ENCODE measurements at regions of chr1 and their contacts with region 1.

Region 1: GRCh38 chr1:39196244-39197215 is 8.0 kb upstream of the MACF1 start:
- DNase-seq: peak; percentile 32 to 86 (median 79)
- H3K4me3 ChIP-seq: peak overlapping the region; percentile 44
- H3K4me3 Mint-ChIP-seq: peak overlapping the region; percentile 38 to 83 (median 71)
- H3K27ac ChIP-seq: peak overlapping the region; percentile 60
- H3K27ac Mint-ChIP-seq: peak overlapping the region; percentile 39 to 97 (median 90)
- H3K4me1 ChIP-seq: peaks cover 67% of the 10 kb centered on the region
- H3K4me1 Mint-ChIP-seq: peaks cover 72 to 81% (median 78%) of the 10 kb centered on the region in 3 donors
- H3K27me3 ChIP-seq: no peaks in the 10 kb centered on the region
- H3K27me3 Mint-ChIP-seq: no peaks in the 10 kb centered on the region

Region 2: GRCh38 chr1:38953433-38953860 is 243.1 kb before region 1 on chr1:
- CTCF ChIA-PET with region 1: no interaction called
- POLR2A ChIA-PET with region 1: no interaction called
- DNase-seq: no peak
- H3K4me3 ChIP-seq: no peak overlapping the region
- H3K4me3 Mint-ChIP-seq: no peak overlapping the region
- H3K27ac ChIP-seq: no peak overlapping the region
- H3K27ac Mint-ChIP-seq: peak overlapping the region in 1 of 8 donors; percentile 19
- H3K4me1 ChIP-seq: no peaks in the 10 kb centered on the region
- H3K4me1 Mint-ChIP-seq: peaks cover 2 to 6% (median 6%) of the 10 kb centered on the region in 3 donors
- H3K27me3 ChIP-seq: no peaks in the 10 kb centered on the region
- H3K27me3 Mint-ChIP-seq: no peaks in the 10 kb centered on the region

Region 3: DNA sequence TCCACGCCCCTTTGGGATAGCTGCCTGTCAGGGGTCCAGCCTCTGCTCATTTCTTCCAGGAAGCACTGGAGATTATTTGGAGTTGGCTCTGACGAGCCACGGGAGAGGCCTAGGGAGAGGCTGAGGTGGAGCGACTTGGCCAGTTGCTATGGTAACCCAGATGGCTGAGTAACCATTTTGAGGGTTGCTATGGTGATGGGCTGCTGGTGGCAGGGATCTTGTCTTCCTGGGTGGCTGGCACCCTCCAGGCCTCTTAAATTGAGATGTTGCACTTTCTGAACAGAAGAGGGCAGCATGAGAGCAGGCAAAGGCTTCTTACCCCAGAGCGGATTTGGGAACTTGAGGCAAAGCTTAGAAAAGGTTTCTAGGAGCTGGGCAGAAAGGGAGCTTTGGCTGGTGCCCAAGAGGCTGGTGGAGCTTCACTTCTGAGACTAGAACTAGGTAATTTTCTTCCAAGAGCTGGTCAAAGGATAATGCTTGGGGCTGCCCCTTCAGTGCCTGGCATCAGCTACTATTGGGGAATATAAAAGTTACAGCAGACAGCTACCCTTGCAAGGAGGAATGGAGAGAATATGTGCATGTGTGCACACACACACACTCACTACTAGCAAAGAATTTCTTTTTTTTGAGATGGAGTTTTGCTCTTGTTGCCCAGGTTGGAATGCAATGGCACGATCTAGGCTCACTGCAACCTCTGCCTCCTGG is 97.8 kb before region 1 on chr1:
- CTCF ChIA-PET with region 1: interaction called, 37 read pairs
- POLR2A ChIA-PET with region 1: no interaction called
- DNase-seq: peak; percentile 29 to 77 (median 67)
- H3K4me3 ChIP-seq: no peak overlapping the region
- H3K4me3 Mint-ChIP-seq: peak overlapping the region in 1 of 7 donors; percentile 51
- H3K27ac ChIP-seq: no peak overlapping the region
- H3K27ac Mint-ChIP-seq: peak overlapping the region in 5 of 8 donors; percentile 6 to 64 (median 27)
- H3K4me1 ChIP-seq: peaks cover 16% of the 10 kb centered on the region
- H3K4me1 Mint-ChIP-seq: peaks cover 10 to 17% (median 15%) of the 10 kb centered on the region in 3 donors
- H3K27me3 ChIP-seq: no peaks in the 10 kb centered on the region
- H3K27me3 Mint-ChIP-seq: peaks cover 0 to 2% of the 10 kb centered on the region in 2 donors

Region 4: GRCh38 chr1:39214998-39215873 is 18.7 kb after region 1 on chr1:
- CTCF ChIA-PET with region 1: interaction called, 76 read pairs
- POLR2A ChIA-PET with region 1: interaction called, 12 read pairs
- DNase-seq: peak in 4 of 5 donors; percentile 30 to 58 (median 40)
- H3K4me3 ChIP-seq: peak overlapping the region; percentile 54
- H3K4me3 Mint-ChIP-seq: peak overlapping the region; percentile 84 to 96 (median 90)
- H3K27ac ChIP-seq: peak overlapping the region; percentile 62
- H3K27ac Mint-ChIP-seq: peak overlapping the region; percentile 76 to 96 (median 92)
- H3K4me1 ChIP-seq: peaks cover 46% of the 10 kb centered on the region
- H3K4me1 Mint-ChIP-seq: peaks cover 53 to 70% (median 69%) of the 10 kb centered on the region in 3 donors
- H3K27me3 ChIP-seq: no peaks in the 10 kb centered on the region
- H3K27me3 Mint-ChIP-seq: no peaks in the 10 kb centered on the region

Region 5: GRCh38 chr1:39230261-39231190 is 34.0 kb after region 1 on chr1:
- CTCF ChIA-PET with region 1: interaction called, 16 read pairs
- POLR2A ChIA-PET with region 1: interaction called, 5 read pairs
- DNase-seq: peak in 3 of 5 donors; percentile 2 to 11 (median 4)
- H3K4me3 ChIP-seq: no peak overlapping the region
- H3K4me3 Mint-ChIP-seq: peak overlapping the region; percentile 2 to 78 (median 54)
- H3K27ac ChIP-seq: no peak overlapping the region
- H3K27ac Mint-ChIP-seq: peak overlapping the region; percentile 52 to 92 (median 86)
- H3K4me1 ChIP-seq: peaks cover 38% of the 10 kb centered on the region
- H3K4me1 Mint-ChIP-seq: peaks cover 59 to 75% (median 74%) of the 10 kb centered on the region in 3 donors
- H3K27me3 ChIP-seq: no peaks in the 10 kb centered on the region
- H3K27me3 Mint-ChIP-seq: no peaks in the 10 kb centered on the region

Region 6: GRCh38 chr1:39250460-39251240 is 54.1 kb after region 1 on chr1:
- CTCF ChIA-PET with region 1: interaction called, 214 read pairs
- POLR2A ChIA-PET with region 1: interaction called, 4 read pairs
- DNase-seq: no peak
- H3K4me3 ChIP-seq: no peak overlapping the region
- H3K4me3 Mint-ChIP-seq: no peak overlapping the region
- H3K27ac ChIP-seq: no peak overlapping the region
- H3K27ac Mint-ChIP-seq: peak overlapping the region in 6 of 8 donors; percentile 41 to 74 (median 50)
- H3K4me1 ChIP-seq: no peaks in the 10 kb centered on the region
- H3K4me1 Mint-ChIP-seq: peaks cover 46 to 57% (median 52%) of the 10 kb centered on the region in 3 donors
- H3K27me3 ChIP-seq: no peaks in the 10 kb centered on the region
- H3K27me3 Mint-ChIP-seq: no peaks in the 10 kb centered on the region

Region 7: DNA sequence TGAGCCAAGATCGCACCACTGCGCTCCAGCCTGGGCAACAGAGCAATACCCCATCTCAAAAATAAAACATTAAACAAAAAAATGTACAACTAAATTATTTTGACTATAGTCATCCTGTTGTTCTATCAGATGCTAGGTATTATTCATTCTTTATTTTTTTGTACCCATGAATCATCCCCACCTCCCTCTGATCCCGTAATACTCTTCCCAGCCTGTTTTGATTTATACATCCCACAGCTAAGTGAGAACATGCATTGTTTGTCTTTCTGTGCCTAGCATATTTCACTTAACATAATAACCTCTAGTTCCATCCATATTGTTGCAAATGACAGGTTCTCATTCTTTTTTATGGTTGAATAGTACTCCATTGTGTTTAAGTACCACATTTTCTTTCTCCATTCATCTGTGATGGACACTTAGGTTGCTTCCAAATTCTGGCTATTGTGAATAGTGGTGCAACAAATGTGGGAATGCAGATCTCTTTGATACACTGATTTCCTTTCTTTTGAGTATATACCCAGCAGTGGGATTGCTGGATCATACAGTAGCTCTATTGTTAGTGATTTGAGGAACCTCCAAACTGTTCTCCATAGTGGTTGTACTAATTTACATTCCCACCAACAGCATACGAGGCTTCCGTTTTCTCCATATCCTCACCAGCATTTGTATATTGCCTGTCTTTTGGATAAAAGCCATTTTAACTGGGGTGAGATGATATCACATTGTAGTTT is 92.4 kb after region 1 on chr1:
- CTCF ChIA-PET with region 1: interaction called, 12 read pairs
- POLR2A ChIA-PET with region 1: no interaction called
- DNase-seq: no peak
- H3K4me3 ChIP-seq: no peak overlapping the region
- H3K4me3 Mint-ChIP-seq: no peak overlapping the region
- H3K27ac ChIP-seq: no peak overlapping the region
- H3K27ac Mint-ChIP-seq: peak overlapping the region in 3 of 8 donors; percentile 21 to 58 (median 25)
- H3K4me1 ChIP-seq: no peaks in the 10 kb centered on the region
- H3K4me1 Mint-ChIP-seq: peaks cover 0 to 9% (median 5%) of the 10 kb centered on the region in 3 donors
- H3K27me3 ChIP-seq: no peaks in the 10 kb centered on the region
- H3K27me3 Mint-ChIP-seq: no peaks in the 10 kb centered on the region

Region 8: GRCh38 chr1:39609618-39610331 is 413.2 kb after region 1 on chr1:
- CTCF ChIA-PET with region 1: no interaction called
- POLR2A ChIA-PET with region 1: no interaction called
- DNase-seq: peak; percentile 40 to 75 (median 52)
- H3K4me3 ChIP-seq: no peak overlapping the region
- H3K4me3 Mint-ChIP-seq: peak overlapping the region in 1 of 7 donors; percentile 11
- H3K27ac ChIP-seq: no peak overlapping the region
- H3K27ac Mint-ChIP-seq: peak overlapping the region in 1 of 8 donors; percentile 22
- H3K4me1 ChIP-seq: no peaks in the 10 kb centered on the region
- H3K4me1 Mint-ChIP-seq: peaks cover 7 to 16% (median 11%) of the 10 kb centered on the region in 3 donors
- H3K27me3 ChIP-seq: no peaks in the 10 kb centered on the region
- H3K27me3 Mint-ChIP-seq: peaks cover 12 to 17% of the 10 kb centered on the region in 2 donors